Breast epithelium (tissue), 4 donors: ENCODE measurements at regions of chr4 and their contacts with region 1.

Region 1: GRCh38 chr4:27429364-27429871 is 568.8 kb downstream of the STIM2 start:
- DNase-seq: no peak
- H3K4me3 ChIP-seq: no peak overlapping the region
- H3K27ac ChIP-seq: no peak overlapping the region
- H3K4me1 ChIP-seq: no peaks in the 10 kb centered on the region
- H3K27me3 ChIP-seq: no peaks in the 10 kb centered on the region
- CTCF ChIP-seq: no peak
- POLR2A ChIP-seq: no peak

Region 2: DNA sequence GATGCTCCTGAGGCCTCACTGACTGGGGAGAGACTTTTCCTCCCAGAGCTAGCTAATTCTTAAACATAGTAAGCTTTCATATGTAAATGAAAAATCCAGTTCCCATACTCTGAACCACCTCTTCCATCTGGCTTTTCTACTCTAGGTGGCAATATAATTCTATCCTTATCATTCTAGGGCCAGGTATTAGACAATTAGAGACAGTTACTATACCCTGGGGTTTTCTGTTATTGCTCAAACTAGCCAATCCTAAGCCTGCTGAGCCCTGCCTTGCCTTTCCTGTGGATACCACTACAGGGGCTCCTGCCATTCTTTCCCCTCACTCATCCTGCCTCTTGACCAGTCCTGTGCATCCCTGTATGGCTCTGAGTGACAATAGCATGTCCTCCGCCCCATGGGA is 16.8 kb before region 1 on chr4:
- intact Hi-C with region 1: no loop called
- DNase-seq: no peak
- H3K4me3 ChIP-seq: no peak overlapping the region
- H3K27ac ChIP-seq: no peak overlapping the region
- H3K4me1 ChIP-seq: no peaks in the 10 kb centered on the region
- H3K27me3 ChIP-seq: no peaks in the 10 kb centered on the region
- CTCF ChIP-seq: no peak
- POLR2A ChIP-seq: no peak

Region 3: GRCh38 chr4:27568236-27568951 is 139.0 kb after region 1 on chr4:
- intact Hi-C with region 1: loop called (anchors 10 kb)
- DNase-seq: no peak
- H3K4me3 ChIP-seq: no peak overlapping the region
- H3K27ac ChIP-seq: no peak overlapping the region
- H3K4me1 ChIP-seq: no peaks in the 10 kb centered on the region
- H3K27me3 ChIP-seq: no peaks in the 10 kb centered on the region
- CTCF ChIP-seq: no peak
- POLR2A ChIP-seq: no peak